Activated naive CD4-positive, alpha-beta T cell treated with anti-CD3 and anti-CD28 coated beads, Interleukin-2, amount 10 ng/mL, durations not matched to agents 7 days and 5 days (primary cell): ENCODE measurements at regions of chr1 and their contacts with region 1.

Region 1: DNA sequence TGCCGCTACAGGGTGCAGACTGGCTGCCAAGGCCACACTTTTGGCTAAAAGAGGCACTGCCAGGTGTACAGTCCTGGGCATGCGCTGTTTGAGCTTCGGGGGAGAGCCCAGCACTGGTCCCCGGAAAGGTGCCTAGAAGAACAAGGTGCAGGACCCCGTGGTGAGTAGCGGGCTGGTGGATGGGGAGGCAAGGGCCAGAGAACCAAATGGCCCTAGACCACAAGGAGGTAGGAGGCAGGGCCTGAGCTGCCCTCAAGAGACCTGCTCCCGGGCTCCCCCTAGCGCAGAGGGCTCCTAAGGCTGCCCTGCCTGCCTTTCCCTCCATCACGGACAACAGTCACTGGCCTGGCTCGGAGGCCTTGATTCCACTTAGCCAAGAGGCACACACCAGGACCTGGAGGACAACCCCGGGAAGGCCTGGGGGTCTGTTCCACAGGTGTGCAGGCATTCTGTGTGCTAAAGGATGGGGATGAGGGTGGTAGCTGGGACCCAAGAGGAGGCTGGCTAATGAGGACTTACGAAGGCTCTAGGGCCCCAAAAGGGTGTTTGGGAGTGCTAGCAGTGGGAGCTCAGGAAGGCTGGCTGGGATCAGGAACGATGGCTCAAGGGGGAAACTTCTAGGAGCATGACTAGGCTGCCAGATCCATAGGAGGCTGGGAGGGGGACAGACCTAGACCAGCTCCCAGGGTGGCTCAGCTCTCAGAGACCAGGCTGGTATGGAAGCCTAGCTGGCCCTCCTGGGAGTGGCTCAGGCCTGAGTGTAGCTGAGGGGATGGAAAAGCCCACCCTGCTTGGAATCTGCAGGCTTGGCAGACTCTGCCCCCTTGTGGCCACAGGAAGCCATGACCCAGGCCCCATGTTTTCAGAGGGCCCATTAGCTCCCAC is 742 bp downstream of the ARTN start:
- DNase-seq: peak; percentile 70
- H3K4me3 Mint-ChIP-seq: no peak overlapping the region
- H3K27ac Mint-ChIP-seq: no peak overlapping the region
- H3K4me1 Mint-ChIP-seq: peaks cover 14% of the 10 kb centered on the region
- H3K27me3 Mint-ChIP-seq: peaks cover 55% of the 10 kb centered on the region

Region 2: GRCh38 chr1:43653339-43653738 is 281.0 kb before region 1 on chr1:
- CTCF ChIA-PET with region 1: interaction called, 13 read pairs
- DNase-seq: no peak
- H3K4me3 Mint-ChIP-seq: no peak overlapping the region
- H3K27ac Mint-ChIP-seq: no peak overlapping the region
- H3K4me1 Mint-ChIP-seq: peaks cover 35% of the 10 kb centered on the region
- H3K27me3 Mint-ChIP-seq: peaks cover 4% of the 10 kb centered on the region

Region 3: DNA sequence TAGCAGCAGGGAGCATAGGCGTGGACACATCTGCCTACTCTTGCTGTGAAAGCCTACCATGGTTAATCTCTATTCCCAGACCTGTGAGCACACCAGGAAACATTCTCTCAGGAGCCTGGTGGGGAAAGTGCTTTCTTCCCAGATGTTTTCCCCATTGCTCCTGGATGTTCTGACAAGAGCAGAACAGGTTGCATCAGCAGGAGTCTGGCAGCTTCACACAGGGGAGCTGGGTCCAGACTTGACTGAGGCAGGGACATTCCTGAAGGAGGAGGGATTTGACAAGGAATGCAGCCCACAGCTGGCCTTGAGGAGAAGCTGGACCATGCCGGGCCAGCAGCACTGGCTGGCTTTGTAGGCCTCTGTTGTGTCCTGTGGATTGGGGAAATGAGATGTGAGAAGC is 21.7 kb before region 1 on chr1:
- CTCF ChIA-PET with region 1: interaction called, 16 read pairs
- DNase-seq: no peak
- H3K4me3 Mint-ChIP-seq: no peak overlapping the region
- H3K27ac Mint-ChIP-seq: no peak overlapping the region
- H3K4me1 Mint-ChIP-seq: no peaks in the 10 kb centered on the region
- H3K27me3 Mint-ChIP-seq: peaks cover 3% of the 10 kb centered on the region

Region 4: DNA sequence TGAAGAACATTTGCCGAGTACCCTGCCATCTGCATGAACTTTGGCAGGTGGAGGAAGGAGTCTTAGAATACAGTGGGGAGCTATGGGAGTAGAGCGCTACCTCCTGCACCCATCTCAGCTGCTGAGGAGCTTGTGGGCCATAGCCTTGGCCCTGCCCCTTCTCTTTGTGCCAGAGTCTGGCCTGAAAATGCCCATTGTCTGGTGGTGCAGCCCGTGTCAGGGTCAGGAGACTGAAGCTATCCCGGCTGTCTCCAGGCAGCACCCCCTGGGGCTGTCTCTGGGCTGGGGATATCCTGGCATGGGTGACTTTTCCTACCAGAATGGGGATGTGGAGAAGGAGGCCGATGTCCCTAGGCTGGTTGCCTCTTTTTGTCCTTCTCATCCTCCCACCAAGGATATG is 19.7 kb after region 1 on chr1:
- CTCF ChIA-PET with region 1: interaction called, 105 read pairs
- DNase-seq: no peak
- H3K4me3 Mint-ChIP-seq: no peak overlapping the region
- H3K27ac Mint-ChIP-seq: no peak overlapping the region
- H3K4me1 Mint-ChIP-seq: peaks cover 7% of the 10 kb centered on the region
- H3K27me3 Mint-ChIP-seq: no peaks in the 10 kb centered on the region

Region 5: GRCh38 chr1:44049839-44050238 is 115.5 kb after region 1 on chr1:
- CTCF ChIA-PET with region 1: interaction called, 18 read pairs
- DNase-seq: no peak
- H3K4me3 Mint-ChIP-seq: no peak overlapping the region
- H3K27ac Mint-ChIP-seq: no peak overlapping the region
- H3K4me1 Mint-ChIP-seq: peaks cover 14% of the 10 kb centered on the region
- H3K27me3 Mint-ChIP-seq: peaks cover 14% of the 10 kb centered on the region